Activated CD8-positive, alpha-beta T cell treated with anti-CD3 and anti-CD28 coated beads, Interleukin-2, amount 10 ng/mL, durations not matched to agents 7 days and 5 days (primary cell): ENCODE measurements at regions of chr5 and their contacts with region 1.

Region 1: DNA sequence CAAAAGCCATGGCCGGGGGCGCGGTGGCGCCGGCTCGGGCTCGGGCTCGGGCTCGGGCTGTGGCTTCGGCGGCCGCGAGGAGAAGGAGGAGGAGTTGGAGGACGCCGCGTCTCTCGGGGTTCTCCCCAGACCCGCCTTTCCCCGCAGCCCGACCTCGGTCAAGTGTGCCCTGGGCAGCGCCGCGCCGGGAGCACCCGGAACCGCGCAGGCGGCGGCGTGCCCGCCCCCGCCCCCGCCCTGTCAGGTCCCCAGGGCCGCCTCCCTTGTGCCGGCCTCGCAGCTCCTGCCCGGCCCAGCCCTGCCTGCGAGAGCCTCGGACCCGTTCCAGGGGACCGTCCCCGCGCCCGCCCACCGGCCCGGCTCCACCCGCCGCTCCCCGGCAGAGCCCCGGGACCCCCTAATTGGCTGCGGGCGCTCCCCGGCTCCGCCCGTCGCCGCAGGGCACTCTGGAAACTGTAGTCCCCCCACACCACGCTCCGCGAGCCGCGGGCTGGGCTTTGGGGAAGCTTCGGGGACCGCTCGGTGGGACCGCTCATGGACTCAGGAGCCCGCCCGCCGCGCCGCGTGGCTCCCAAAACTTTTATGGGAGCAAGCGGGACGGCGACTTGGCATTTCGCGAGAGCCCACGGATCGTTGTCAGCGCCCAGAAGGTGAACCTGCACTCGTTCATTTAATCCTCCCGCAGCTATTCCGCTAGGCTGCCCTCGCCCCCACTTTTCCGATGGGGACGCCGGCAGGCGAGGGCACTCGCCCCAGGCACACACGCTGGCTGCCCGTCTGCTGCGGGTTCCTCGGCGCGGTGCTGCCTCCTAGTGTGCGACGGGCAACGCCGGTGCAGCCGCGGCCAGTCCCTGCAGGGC is at the start of gene STK10:
- DNase-seq: peak; percentile 93
- ATAC-seq: peak; percentile 78
- H3K4me3 Mint-ChIP-seq: peak within 1 kb of the TSS; percentile 100
- H3K27ac Mint-ChIP-seq: peak within 1 kb of the TSS; percentile 96
- H3K4me1 Mint-ChIP-seq: peaks cover 30% of the 10 kb centered on the region
- H3K27me3 Mint-ChIP-seq: no peaks in the 10 kb centered on the region
- total RNA-seq, gene STK10: 294 to 299 TPM

Region 2: DNA sequence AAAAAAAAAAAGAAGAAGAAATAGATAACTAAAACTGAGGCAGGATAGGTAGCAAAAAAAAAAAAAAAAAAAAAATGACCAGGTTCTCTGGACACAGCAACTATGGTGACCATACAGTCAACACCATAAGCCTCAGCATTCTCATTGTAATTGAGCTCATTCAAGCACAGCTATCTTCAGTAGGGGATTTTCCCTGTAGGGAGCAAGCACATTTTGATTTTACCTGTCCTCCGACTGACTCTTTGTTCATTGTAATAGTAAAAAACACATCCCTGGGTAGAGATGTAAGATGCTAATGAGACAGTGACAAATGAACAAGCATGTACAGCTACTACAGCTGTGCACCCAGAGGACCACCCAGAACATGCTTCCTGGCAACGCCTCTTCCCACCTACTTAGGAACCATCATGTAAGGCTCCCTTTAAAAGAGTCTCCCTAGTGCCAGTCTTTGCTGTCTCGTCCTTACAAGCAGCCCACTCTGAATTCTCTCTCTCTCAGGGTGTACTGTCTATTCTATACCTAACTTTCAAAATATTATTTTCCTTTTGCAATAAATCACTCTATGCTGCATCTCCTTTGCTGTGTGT is 116.9 kb before region 1 on chr5:
- CTCF ChIA-PET with region 1: interaction called, 21 read pairs
- POLR2A ChIA-PET with region 1: interaction called, 6 read pairs
- DNase-seq: no peak
- ATAC-seq: no peak
- H3K4me3 Mint-ChIP-seq: no peak overlapping the region
- H3K27ac Mint-ChIP-seq: peak overlapping the region; percentile 15
- H3K4me1 Mint-ChIP-seq: peaks cover 56% of the 10 kb centered on the region
- H3K27me3 Mint-ChIP-seq: no peaks in the 10 kb centered on the region

Region 3: DNA sequence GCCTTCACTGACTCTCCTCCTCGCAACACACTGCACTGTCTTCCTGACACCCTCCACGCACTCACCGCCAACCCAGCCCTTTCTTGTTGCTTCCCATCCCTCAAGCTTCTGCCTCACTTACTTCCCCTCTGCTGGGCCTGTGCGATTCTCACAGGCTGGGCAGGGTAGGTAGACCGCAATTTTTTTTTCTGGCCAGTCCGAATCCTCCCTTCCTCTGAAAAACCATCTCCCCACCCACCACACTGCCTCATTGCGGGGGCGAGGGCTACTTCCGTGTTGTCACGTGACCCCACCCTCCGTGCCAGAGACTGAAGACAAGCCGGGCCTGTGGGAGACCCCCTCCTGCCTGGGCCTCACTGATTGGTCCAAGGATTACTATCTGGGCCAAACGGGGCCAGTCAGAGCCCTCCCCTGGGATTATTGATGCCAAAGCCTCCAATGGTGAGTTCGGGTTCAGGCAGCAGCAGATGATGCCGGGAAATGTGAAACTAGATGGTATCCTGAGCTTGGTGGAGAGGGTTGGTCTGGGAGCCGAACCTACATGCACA is 73.3 kb before region 1 on chr5:
- CTCF ChIA-PET with region 1: interaction called, 136 read pairs
- POLR2A ChIA-PET with region 1: interaction called, 102 read pairs
- DNase-seq: peak; percentile 93
- ATAC-seq: peak; percentile 71
- H3K4me3 Mint-ChIP-seq: peak overlapping the region; percentile 71
- H3K27ac Mint-ChIP-seq: peak overlapping the region; percentile 97
- H3K4me1 Mint-ChIP-seq: peaks cover 86% of the 10 kb centered on the region
- H3K27me3 Mint-ChIP-seq: no peaks in the 10 kb centered on the region

Region 4: GRCh38 chr5:172170251-172170701 is 18.0 kb before region 1 on chr5:
- CTCF ChIA-PET with region 1: interaction called, 182 read pairs
- POLR2A ChIA-PET with region 1: interaction called, 307 read pairs
- DNase-seq: no peak
- ATAC-seq: no peak
- H3K4me3 Mint-ChIP-seq: no peak overlapping the region
- H3K27ac Mint-ChIP-seq: peak overlapping the region; percentile 81
- H3K4me1 Mint-ChIP-seq: peaks cover 88% of the 10 kb centered on the region
- H3K27me3 Mint-ChIP-seq: no peaks in the 10 kb centered on the region

Region 5: DNA sequence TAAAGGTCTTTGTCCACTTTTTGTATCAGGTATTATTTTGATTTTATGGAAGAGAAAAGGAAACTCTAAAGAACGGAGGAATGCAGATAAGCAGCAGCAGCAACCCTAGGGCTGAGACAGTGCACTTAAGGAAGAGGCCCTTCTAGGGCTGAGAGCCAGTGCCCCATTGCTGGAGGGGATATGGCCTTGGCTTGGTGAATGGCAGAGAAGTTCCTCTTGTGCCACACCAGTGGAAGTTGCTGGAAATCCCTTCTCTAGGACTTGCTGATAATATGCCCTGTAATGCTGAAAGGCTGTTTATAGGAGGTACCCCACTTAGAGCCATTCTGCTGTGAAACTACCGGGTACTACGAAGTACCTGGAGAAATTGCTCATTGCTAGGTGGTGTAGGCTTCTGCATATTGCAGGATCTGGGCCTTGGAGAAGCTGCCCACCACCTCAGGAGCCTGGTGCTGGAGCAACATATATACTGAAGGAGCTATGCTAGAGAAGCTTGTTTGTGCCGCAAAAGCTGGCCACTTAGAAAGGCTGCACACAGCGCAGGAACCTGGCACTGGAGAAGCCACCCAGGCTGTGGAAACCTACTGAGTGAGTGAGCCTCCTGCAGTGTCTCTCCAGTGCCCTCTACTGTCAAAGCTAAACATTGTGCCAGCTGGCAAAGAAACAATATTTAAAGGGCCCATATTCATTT is 104.9 kb after region 1 on chr5:
- CTCF ChIA-PET with region 1: interaction called, 13 read pairs
- POLR2A ChIA-PET with region 1: no interaction called
- DNase-seq: peak; percentile 77
- ATAC-seq: peak; percentile 100
- H3K4me3 Mint-ChIP-seq: no peak overlapping the region
- H3K27ac Mint-ChIP-seq: no peak overlapping the region
- H3K4me1 Mint-ChIP-seq: peaks cover 6% of the 10 kb centered on the region
- H3K27me3 Mint-ChIP-seq: peaks cover 10% of the 10 kb centered on the region

Region 6: DNA sequence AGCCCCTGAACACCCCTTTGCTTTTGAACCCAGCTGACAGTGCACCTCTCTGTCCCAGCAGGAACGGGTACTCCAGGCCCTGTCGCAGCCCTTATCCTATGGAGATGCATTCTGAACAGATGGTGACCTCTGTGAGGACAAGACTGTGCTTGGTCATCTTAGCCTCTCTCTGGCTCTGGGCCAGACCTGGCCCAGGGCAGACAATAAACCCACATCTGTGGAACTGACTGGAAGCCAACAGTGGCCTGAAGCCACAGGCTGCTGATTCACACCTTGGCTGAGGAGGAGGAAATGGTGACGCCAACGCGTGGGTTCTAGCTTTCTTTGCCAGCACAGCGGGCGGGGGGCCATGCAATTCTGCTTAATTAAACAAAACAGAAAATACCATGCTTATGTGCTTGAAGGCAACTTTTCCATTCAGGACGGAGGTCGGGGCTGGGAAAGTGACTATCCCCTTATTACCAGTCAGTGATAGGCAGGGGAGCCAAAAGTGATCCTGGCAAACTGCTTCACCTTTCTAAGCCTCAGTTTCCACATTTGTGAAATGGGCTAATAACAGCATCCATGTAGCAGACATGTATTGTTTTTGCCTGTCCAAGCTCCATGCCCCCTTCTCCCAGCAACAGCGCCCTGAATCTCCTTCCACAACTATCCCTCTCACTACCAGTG is 255.3 kb after region 1 on chr5:
- CTCF ChIA-PET with region 1: no interaction called
- POLR2A ChIA-PET with region 1: no interaction called
- DNase-seq: peak; percentile 48
- ATAC-seq: peak; percentile 63
- H3K4me3 Mint-ChIP-seq: no peak overlapping the region
- H3K27ac Mint-ChIP-seq: no peak overlapping the region
- H3K4me1 Mint-ChIP-seq: peaks cover 11% of the 10 kb centered on the region
- H3K27me3 Mint-ChIP-seq: peaks cover 17% of the 10 kb centered on the region